ENCODE measurements at regions of chr1 and their contacts with region 1.

Region 1: DNA sequence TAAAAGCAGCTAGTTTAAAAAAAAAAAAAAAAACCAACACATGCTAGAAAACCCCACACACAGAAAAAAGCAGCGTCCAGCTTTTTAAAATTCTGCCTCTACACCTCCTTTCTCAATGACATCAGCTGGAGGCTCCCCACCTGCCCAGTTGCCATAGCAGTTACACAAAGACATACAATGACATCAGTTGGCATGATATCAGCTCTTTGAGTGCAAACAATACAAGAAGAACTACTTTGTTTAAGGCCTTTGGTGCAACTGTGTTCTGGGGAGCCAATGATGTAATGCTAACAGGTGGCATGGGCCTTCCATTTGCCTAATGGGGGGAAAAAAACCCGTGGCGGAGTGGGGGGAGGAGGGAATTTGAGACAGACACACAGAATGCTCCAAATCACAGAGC is 32.9 kb downstream of the DUSP10 start:
- DNase-seq: peak; percentile 64 to 94 (median 72)
- H3K4me3 ChIP-seq: no peak overlapping the region
- H3K4me3 Mint-ChIP-seq: peak overlapping the region in 3 of 8 donors; percentile 14 to 48 (median 41)
- H3K27ac ChIP-seq: peak overlapping the region; percentile 63
- H3K27ac Mint-ChIP-seq: peak overlapping the region; percentile 85 to 95 (median 94)
- H3K4me1 ChIP-seq: peaks cover 74% of the 10 kb centered on the region
- H3K4me1 Mint-ChIP-seq: peaks cover 45 to 81% (median 64%) of the 10 kb centered on the region in 4 donors
- H3K27me3 ChIP-seq: no peaks in the 10 kb centered on the region
- H3K27me3 Mint-ChIP-seq: no peaks in the 10 kb centered on the region

Region 2: DNA sequence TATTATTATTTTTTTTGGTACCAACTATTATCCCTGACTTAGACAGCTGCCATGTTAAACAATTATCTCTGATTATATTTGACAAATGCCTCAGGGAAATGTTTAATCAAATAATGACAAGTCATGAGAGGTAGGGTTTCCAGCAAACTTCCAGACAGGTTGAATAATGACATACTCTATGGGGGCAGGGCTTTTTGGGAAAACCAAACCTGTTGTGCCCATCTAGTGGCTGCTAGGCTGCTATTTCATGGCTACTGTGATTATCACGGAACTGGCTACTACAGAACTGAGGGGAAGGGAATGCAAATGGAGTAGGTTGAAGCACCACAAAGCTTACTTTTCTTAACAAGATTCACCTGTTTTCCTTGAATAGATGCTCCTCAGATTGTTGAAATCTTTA is 44.7 kb before region 1 on chr1:
- CTCF ChIA-PET with region 1: interaction called, 3 read pairs
- POLR2A ChIA-PET with region 1: no interaction called
- intact Hi-C with region 1: loop called (anchors 5 kb)
- DNase-seq: no peak
- H3K4me3 ChIP-seq: no peak overlapping the region
- H3K4me3 Mint-ChIP-seq: no peak overlapping the region
- H3K27ac ChIP-seq: no peak overlapping the region
- H3K27ac Mint-ChIP-seq: no peak overlapping the region
- H3K4me1 ChIP-seq: no peaks in the 10 kb centered on the region
- H3K4me1 Mint-ChIP-seq: no peaks in the 10 kb centered on the region
- H3K27me3 ChIP-seq: no peaks in the 10 kb centered on the region
- H3K27me3 Mint-ChIP-seq: peaks cover 3 to 5% of the 10 kb centered on the region in 2 donors

Region 3: DNA sequence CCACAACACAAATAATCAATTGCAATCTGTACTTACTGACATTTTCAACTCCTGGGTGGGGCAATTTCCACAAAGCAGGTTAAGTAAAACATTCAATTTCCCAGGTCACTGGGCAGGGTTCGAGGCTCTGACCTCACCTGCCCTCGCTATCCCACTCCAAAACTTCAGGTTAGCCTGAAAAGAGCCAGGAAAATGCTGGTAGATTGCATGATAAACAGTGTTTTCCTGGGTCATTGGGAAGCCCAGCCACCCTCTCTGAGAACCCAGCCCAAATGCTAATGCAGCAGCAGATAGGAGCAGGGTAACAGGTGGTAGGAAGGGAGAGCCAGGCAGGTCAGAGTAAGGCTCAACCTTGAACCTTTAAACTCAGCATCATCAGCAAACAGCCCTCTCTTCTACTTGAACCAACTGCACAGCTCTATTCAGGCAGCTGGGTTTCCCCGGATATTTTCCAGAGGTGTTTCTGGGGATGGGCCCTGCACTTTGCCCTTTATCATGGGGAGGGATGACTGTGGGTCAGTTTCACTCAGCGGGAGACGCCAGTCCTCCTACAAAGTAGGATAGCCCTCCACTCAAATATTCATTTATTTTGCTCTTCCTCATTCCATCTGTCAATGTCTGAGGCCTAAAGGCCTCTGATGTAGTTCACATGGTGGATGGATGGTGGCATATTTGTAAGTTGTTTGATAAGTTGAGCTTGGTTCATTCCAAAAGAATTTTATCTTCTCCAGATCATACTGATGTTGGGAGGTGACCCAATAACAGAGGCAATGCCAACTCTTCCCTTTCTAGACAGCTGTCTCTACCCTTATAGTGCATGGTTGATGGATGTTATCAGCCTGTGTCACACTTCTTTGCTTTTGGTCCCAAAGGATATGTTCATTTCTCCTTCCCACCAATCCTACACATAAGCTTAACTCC is 32.8 kb before region 1 on chr1:
- CTCF ChIA-PET with region 1: no interaction called
- POLR2A ChIA-PET with region 1: no interaction called
- intact Hi-C with region 1: no loop called
- DNase-seq: no peak
- H3K4me3 ChIP-seq: no peak overlapping the region
- H3K4me3 Mint-ChIP-seq: no peak overlapping the region
- H3K27ac ChIP-seq: no peak overlapping the region
- H3K27ac Mint-ChIP-seq: no peak overlapping the region
- H3K4me1 ChIP-seq: no peaks in the 10 kb centered on the region
- H3K4me1 Mint-ChIP-seq: peaks cover 0 to 7% (median 3%) of the 10 kb centered on the region in 4 donors
- H3K27me3 ChIP-seq: no peaks in the 10 kb centered on the region
- H3K27me3 Mint-ChIP-seq: no peaks in the 10 kb centered on the region

Region 4: GRCh38 chr1:221689138-221689537 is 19.8 kb before region 1 on chr1:
- CTCF ChIA-PET with region 1: interaction called, 5 read pairs
- POLR2A ChIA-PET with region 1: interaction called, 3 read pairs
- intact Hi-C with region 1: loop called (anchors 1 kb)
- DNase-seq: peak in 3 of 5 donors; percentile 31 to 56 (median 38)
- H3K4me3 ChIP-seq: no peak overlapping the region
- H3K4me3 Mint-ChIP-seq: peak overlapping the region in 1 of 8 donors; percentile 7
- H3K27ac ChIP-seq: no peak overlapping the region
- H3K27ac Mint-ChIP-seq: peak overlapping the region; percentile 11 to 87 (median 67)
- H3K4me1 ChIP-seq: no peaks in the 10 kb centered on the region
- H3K4me1 Mint-ChIP-seq: peaks cover 3 to 13% (median 6%) of the 10 kb centered on the region in 4 donors
- H3K27me3 ChIP-seq: no peaks in the 10 kb centered on the region
- H3K27me3 Mint-ChIP-seq: no peaks in the 10 kb centered on the region

Region 5: GRCh38 chr1:221725735-221726672 is 17.0 kb after region 1 on chr1:
- CTCF ChIA-PET with region 1: interaction called, 5 read pairs
- POLR2A ChIA-PET with region 1: interaction called, 16 read pairs
- intact Hi-C with region 1: loop called (anchors 1 kb)
- DNase-seq: peak in 4 of 5 donors; percentile 30 to 38 (median 34)
- H3K4me3 ChIP-seq: no peak overlapping the region
- H3K4me3 Mint-ChIP-seq: peak overlapping the region in 7 of 8 donors; percentile 44 to 82 (median 57)
- H3K27ac ChIP-seq: peak overlapping the region; percentile 25
- H3K27ac Mint-ChIP-seq: peak overlapping the region; percentile 7 to 83 (median 48)
- H3K4me1 ChIP-seq: peaks cover 58% of the 10 kb centered on the region
- H3K4me1 Mint-ChIP-seq: peaks cover 36 to 61% (median 48%) of the 10 kb centered on the region in 4 donors
- H3K27me3 ChIP-seq: no peaks in the 10 kb centered on the region
- H3K27me3 Mint-ChIP-seq: no peaks in the 10 kb centered on the region

Region 6: DNA sequence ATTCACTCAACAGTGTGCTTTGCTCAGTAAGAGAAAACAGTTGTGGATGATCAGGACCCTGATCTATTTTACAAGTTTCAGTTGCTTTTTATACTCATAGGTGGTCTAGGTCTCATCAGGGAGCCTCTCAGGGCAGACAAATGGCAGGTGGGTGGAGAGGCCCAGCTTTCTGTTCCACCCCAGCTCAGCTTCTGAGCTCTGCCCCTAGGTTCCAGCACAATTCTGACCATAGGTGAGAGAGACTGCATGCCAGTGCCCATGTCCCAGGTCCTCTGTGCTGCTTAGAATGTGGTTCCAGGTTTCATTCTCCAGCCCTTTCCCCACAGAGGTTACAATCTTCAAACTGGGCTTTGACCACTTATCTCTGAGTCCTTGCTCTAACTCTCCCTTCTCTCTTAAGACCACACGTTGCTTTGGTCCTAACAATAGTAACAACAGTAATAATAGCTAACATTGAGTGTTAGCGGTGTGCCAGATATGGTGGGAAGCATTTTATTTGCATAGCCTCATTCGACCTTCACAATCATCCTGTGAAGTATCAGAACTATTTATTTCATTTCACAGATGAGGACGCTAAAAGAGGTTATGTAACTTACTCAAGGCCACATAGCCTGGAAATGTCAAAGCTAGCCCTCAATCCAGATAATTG is 52.5 kb after region 1 on chr1:
- CTCF ChIA-PET with region 1: no interaction called
- POLR2A ChIA-PET with region 1: no interaction called
- intact Hi-C with region 1: no loop called
- DNase-seq: no peak
- H3K4me3 ChIP-seq: no peak overlapping the region
- H3K4me3 Mint-ChIP-seq: no peak overlapping the region
- H3K27ac ChIP-seq: no peak overlapping the region
- H3K27ac Mint-ChIP-seq: no peak overlapping the region
- H3K4me1 ChIP-seq: no peaks in the 10 kb centered on the region
- H3K4me1 Mint-ChIP-seq: peaks cover 0 to 4% (median 2%) of the 10 kb centered on the region in 4 donors
- H3K27me3 ChIP-seq: no peaks in the 10 kb centered on the region
- H3K27me3 Mint-ChIP-seq: no peaks in the 10 kb centered on the region

Region 7: DNA sequence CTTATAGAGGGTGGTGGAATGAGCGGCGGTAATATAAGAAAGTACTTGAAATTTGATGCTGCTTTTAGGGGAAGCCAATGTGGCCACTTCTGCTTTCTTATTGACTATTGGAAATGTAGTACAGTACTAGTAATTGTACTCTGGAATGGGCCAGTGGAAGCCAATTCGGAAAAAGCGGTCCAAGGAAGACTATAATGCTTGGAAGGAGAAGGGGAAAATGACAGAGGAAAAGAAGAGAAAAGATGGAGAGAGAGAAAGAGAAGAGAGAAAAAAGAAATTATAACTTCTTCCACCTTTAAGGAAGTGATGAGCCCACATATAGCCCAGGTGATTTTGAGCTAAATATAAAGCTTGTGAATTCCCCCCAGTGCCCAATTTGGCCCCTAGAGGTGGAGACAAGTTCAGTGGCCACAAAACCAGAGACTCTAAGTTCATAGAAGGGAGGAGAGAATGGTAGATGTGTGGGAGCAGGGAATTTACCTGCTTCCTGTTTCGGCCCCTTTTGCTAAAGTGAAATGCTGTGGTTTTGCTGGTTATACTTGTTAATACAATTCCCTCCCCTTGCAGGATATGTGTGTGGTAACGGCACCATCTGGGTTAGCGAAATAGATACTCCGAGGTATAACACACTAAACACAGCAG is 68.6 kb after region 1 on chr1:
- CTCF ChIA-PET with region 1: no interaction called
- POLR2A ChIA-PET with region 1: interaction called, 8 read pairs
- intact Hi-C with region 1: loop called (anchors 2 kb)
- DNase-seq: peak; percentile 54 to 80 (median 66)
- H3K4me3 ChIP-seq: no peak overlapping the region
- H3K4me3 Mint-ChIP-seq: peak overlapping the region; percentile 49 to 84 (median 68)
- H3K27ac ChIP-seq: peak overlapping the region; percentile 53
- H3K27ac Mint-ChIP-seq: peak overlapping the region; percentile 73 to 90 (median 86)
- H3K4me1 ChIP-seq: peaks cover 54% of the 10 kb centered on the region
- H3K4me1 Mint-ChIP-seq: peaks cover 42 to 71% (median 56%) of the 10 kb centered on the region in 4 donors
- H3K27me3 ChIP-seq: no peaks in the 10 kb centered on the region
- H3K27me3 Mint-ChIP-seq: no peaks in the 10 kb centered on the region

Measured in CD4-positive, alpha-beta memory T cell (primary cell).